Activated B cell treated with CpG ODN at 0.5 μM for 24 hours (primary cell): ENCODE measurements at regions of chr14 and their contacts with region 1.

Region 1: GRCh38 chr14:31489691-31490090 is 1.9 kb upstream of the GPR33 start:
- DNase-seq: no peak
- ATAC-seq: peak; percentile 75
- H3K4me3 Mint-ChIP-seq: peak overlapping the region; percentile 25
- H3K27ac Mint-ChIP-seq: peak overlapping the region; percentile 16
- H3K4me1 Mint-ChIP-seq: peaks cover 71% of the 10 kb centered on the region
- H3K27me3 Mint-ChIP-seq: no peaks in the 10 kb centered on the region
- CTCF ChIP-seq: no peak

Region 2: DNA sequence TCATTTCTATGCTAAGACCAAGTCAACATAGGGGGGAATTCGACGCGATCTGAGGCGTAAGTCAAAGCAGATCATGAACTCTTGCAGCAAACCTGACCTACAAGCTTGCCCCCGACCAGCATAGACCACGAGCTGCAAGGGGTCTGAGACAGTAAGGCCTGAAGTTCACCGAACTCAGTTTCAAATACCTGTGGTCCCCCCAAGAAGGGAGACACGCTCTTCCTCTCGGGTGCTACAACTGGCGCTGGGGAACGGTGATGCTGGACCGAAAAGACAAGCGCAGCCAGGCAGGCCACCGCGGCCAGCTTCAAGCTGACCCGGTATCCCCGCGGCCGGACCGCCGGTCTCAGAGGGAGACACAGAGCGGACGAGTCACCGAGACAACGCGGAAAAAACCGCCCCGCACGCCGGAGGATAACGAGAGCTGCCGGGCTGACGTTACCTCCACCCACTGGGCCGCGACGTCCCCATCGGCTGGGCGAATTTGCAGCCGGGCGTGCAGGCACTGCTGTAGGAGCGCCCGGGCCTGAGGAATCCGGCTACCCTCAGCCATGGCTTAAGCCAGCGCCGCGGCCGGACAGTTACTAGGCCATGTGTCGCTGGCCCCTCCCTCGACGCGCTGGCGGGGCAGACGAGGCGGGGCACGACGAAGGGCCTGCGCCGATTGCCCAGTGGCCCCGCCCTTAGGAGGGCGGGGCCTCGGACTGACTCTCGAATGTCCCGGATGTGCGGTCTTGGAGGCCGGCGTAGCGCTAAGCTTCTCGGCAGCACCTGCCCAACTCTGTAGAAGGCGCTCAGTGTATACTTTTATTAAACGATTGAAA is 32.6 kb before region 1 on chr14 and contains the start of gene DTD2:
- CTCF ChIA-PET with region 1: interaction called, 3 read pairs
- POLR2A ChIA-PET with region 1: interaction called, 4 read pairs
- intact Hi-C with region 1: loop called (anchors 1 kb)
- DNase-seq: peak; percentile 82
- ATAC-seq: peak; percentile 98
- H3K4me3 Mint-ChIP-seq: peak within 1 kb of the TSS; percentile 99
- H3K27ac Mint-ChIP-seq: peak within 1 kb of the TSS; percentile 96
- H3K4me1 Mint-ChIP-seq: peaks cover 31% of the 10 kb centered on the region
- H3K27me3 Mint-ChIP-seq: no peaks in the 10 kb centered on the region
- CTCF ChIP-seq: no peak
- total RNA-seq, gene DTD2: 19.8 and 21.3 TPM in 2 replicates